Activated naive CD4-positive, alpha-beta T cell treated with anti-CD3 and anti-CD28 coated beads for 36 hours (primary cell): ENCODE measurements at regions of chr6 and their contacts with region 1.

Region 1: GRCh38 chr6:82040405-82041221 is 206.9 kb downstream of the IBTK start:
- DNase-seq: peak; percentile 14
- H3K4me3 Mint-ChIP-seq: no peak overlapping the region
- H3K27ac Mint-ChIP-seq: no peak overlapping the region
- H3K4me1 Mint-ChIP-seq: no peaks in the 10 kb centered on the region
- H3K27me3 Mint-ChIP-seq: no peaks in the 10 kb centered on the region

Region 2: GRCh38 chr6:80605165-80605989 is 1435.2 kb before region 1 on chr6:
- CTCF ChIA-PET with region 1: no interaction called
- intact Hi-C with region 1: loop called (anchors 1 kb)
- DNase-seq: no peak
- H3K4me3 Mint-ChIP-seq: no peak overlapping the region
- H3K27ac Mint-ChIP-seq: no peak overlapping the region
- H3K4me1 Mint-ChIP-seq: no peaks in the 10 kb centered on the region
- H3K27me3 Mint-ChIP-seq: peaks cover 14% of the 10 kb centered on the region

Region 3: DNA sequence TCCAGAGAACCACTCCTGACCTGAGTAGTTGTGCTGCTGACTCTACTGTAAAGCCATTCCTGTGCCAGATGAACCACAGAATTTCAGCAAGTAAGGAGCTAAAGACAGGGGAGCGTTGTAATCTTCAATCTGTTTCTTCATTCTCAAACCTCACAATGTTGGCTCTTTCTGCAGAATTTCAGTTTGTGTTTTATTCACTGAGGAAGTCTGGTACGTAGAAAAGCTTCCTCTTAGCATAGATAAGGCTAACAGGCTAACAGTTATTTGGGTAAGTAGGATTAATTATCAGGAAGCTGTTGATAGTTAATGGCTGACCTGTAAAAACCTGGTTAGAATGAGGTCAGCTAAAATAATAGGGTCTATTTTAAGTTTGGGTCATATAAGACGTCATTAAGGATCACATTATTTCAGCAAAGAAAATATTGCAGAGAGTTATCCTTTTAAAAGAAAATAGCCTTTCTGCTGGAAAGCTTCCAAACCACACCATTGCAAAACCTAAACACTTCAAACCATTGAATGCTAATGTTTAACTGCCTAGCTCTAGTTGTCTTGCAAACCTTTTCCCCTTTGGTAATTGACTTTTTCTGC is 274.0 kb before region 1 on chr6:
- CTCF ChIA-PET with region 1: no interaction called
- intact Hi-C with region 1: loop called (anchors 5 kb)
- DNase-seq: no peak
- H3K4me3 Mint-ChIP-seq: no peak overlapping the region
- H3K27ac Mint-ChIP-seq: no peak overlapping the region
- H3K4me1 Mint-ChIP-seq: no peaks in the 10 kb centered on the region
- H3K27me3 Mint-ChIP-seq: peaks cover 14% of the 10 kb centered on the region